ENCODE measurements at regions of chr19 and their contacts with region 1.

Region 1: DNA sequence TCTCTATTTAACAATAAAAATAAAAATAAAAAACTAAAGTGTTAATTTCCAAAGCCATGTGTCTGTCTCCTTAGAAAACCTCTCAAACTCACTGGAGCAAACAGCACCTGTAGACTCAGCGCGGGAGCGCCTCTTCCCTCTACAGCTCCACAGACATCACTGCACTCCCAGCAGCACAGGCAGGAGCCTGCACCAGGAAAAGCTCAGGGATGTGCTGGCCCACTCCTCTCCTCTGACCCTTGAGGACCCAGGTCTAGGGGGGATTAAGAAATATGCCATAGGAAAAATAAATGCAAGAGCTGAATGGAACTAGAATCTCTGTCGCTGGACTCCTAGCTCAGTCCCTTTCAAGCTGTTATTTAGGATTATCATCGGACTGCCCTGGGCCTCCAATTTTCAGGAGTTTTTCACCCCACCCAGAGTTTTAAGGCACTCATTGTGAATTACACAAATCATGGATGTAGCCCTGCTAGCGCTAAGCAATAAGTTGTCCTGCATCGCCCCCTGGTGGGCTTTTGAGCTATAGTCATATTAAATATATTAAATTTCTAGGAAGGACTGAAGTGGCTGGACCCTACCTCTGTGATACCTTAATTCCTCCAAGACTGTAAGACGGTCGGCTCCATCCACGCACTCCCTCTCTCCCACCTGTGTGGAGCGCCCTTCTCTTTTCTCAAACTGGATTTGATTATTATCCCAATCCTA is 333.9 kb downstream of the UQCRFS1 start:
- DNase-seq: peak; percentile 46 to 68
- H3K4me3 ChIP-seq: no peak overlapping the region
- H3K4me3 Mint-ChIP-seq: no peak overlapping the region
- H3K27ac Mint-ChIP-seq: no peak overlapping the region
- H3K4me1 ChIP-seq: no peaks in the 10 kb centered on the region
- H3K4me1 Mint-ChIP-seq: no peaks in the 10 kb centered on the region
- H3K27me3 ChIP-seq: no peaks in the 10 kb centered on the region
- H3K27me3 Mint-ChIP-seq: peaks cover 5% of the 10 kb centered on the region
- CTCF ChIP-seq: peak; percentile 31 to 84

Region 2: DNA sequence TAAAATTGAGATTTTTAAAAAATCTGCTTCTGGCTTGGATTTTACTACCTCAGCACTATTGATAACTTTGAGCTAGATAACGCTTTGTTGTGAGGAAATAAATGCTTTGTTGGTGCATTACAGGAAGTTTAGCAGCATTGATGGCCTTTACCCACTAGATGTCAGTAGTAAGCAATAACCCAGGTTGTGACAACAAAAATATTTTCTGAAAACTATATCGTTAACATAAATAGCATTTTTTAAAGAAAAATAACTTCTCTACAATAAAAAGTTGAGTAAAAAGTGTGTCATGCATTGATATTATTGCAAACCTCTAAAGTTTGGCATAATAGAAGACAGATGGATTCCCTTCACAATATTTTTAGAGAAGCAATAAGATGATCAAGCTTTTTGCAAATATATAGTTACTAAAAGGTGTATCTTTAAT is 912.6 kb before region 1 on chr19:
- CTCF ChIA-PET with region 1: no interaction called
- POLR2A ChIA-PET with region 1: no interaction called
- intact Hi-C with region 1: loop called (anchors 2 kb)
- DNase-seq: peak in 1 of 2 experiments; percentile 10
- H3K4me3 ChIP-seq: no peak overlapping the region
- H3K4me3 Mint-ChIP-seq: no peak overlapping the region
- H3K27ac Mint-ChIP-seq: no peak overlapping the region
- H3K4me1 ChIP-seq: peaks cover 4% of the 10 kb centered on the region
- H3K4me1 Mint-ChIP-seq: no peaks in the 10 kb centered on the region
- H3K27me3 ChIP-seq: no peaks in the 10 kb centered on the region
- H3K27me3 Mint-ChIP-seq: no peaks in the 10 kb centered on the region
- CTCF ChIP-seq: peak; percentile 69 to 73

Region 3: DNA sequence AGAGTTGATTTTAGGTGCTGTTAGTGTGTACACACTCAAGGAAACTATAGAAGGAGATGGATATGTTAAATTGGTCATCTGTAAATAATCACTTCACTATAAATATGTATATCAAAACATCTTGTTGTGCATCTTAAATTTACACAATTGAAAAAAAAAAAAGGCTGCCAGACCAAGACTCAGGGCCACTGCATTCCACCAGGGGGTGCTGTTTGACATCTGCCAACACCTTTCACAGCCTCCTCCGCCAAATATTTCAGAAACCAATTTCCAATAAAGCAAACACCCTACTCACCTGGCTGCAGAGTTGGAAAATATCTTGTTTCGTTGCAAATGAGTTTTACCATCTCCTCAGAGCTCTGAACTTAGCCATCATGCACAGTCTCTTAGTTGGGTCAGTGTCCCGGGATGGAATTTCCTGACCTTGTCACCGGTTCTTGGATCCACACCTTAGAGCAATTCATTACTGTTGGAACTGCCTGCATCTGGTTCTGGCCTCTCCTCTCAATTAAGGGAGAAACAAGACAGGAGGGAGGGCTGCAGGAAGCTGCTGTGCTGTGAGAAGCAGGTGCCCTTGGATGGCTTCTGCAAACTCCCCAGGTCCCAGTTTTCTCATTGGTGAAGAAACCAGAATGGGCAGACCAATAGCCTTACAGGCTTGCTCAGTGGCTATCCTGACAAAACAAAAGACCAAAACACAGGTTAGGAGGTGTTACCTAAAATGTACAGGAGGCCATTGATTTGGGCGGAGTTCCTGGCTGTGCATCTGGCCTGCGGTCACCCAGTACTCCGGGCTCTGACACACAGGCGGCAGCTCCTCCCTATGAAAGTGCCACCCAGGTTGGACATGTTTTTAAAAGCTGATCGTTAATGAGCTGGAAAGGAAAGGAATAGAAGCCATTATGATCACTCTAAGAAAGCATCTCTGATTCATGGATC is 412.6 kb before region 1 on chr19:
- CTCF ChIA-PET with region 1: interaction called, 4 read pairs
- POLR2A ChIA-PET with region 1: no interaction called
- intact Hi-C with region 1: loop called (anchors 1 kb)
- DNase-seq: peak; percentile 61 to 72
- H3K4me3 ChIP-seq: no peak overlapping the region
- H3K4me3 Mint-ChIP-seq: no peak overlapping the region
- H3K27ac Mint-ChIP-seq: no peak overlapping the region
- H3K4me1 ChIP-seq: no peaks in the 10 kb centered on the region
- H3K4me1 Mint-ChIP-seq: no peaks in the 10 kb centered on the region
- H3K27me3 ChIP-seq: no peaks in the 10 kb centered on the region
- H3K27me3 Mint-ChIP-seq: peaks cover 2% of the 10 kb centered on the region
- CTCF ChIP-seq: peak; percentile 66 to 69

Region 4: GRCh38 chr19:28737021-28737895 is 141.8 kb before region 1 on chr19:
- CTCF ChIA-PET with region 1: interaction called, 22 read pairs
- POLR2A ChIA-PET with region 1: no interaction called
- intact Hi-C with region 1: loop called (anchors 1 kb)
- DNase-seq: no peak
- H3K4me3 ChIP-seq: no peak overlapping the region
- H3K4me3 Mint-ChIP-seq: no peak overlapping the region
- H3K27ac Mint-ChIP-seq: no peak overlapping the region
- H3K4me1 ChIP-seq: no peaks in the 10 kb centered on the region
- H3K4me1 Mint-ChIP-seq: no peaks in the 10 kb centered on the region
- H3K27me3 ChIP-seq: no peaks in the 10 kb centered on the region
- H3K27me3 Mint-ChIP-seq: no peaks in the 10 kb centered on the region
- CTCF ChIP-seq: peak; percentile 18 to 48

Measured in Caco-2 (cell line).